ENCODE measurements at regions of chr1 and their contacts with region 1.

Region 1: GRCh38 chr1:13976485-13976884 is 276.5 kb downstream of the PRDM2 start:
- DNase-seq: no peak
- H3K4me3 ChIP-seq: no peak overlapping the region
- CTCF ChIP-seq: no peak
- POLR2A ChIP-seq: no peak

Region 2: GRCh38 chr1:14270821-14271220 is 294.3 kb after region 1 on chr1:
- intact Hi-C with region 1: loop called (anchors 5 kb)
- DNase-seq: no peak
- H3K4me3 ChIP-seq: no peak overlapping the region
- CTCF ChIP-seq: no peak
- POLR2A ChIP-seq: no peak

Measured in lower leg skin (tissue), 4 donors.